ENCODE measurements at regions of chr2 and their contacts with region 1.

Region 1: DNA sequence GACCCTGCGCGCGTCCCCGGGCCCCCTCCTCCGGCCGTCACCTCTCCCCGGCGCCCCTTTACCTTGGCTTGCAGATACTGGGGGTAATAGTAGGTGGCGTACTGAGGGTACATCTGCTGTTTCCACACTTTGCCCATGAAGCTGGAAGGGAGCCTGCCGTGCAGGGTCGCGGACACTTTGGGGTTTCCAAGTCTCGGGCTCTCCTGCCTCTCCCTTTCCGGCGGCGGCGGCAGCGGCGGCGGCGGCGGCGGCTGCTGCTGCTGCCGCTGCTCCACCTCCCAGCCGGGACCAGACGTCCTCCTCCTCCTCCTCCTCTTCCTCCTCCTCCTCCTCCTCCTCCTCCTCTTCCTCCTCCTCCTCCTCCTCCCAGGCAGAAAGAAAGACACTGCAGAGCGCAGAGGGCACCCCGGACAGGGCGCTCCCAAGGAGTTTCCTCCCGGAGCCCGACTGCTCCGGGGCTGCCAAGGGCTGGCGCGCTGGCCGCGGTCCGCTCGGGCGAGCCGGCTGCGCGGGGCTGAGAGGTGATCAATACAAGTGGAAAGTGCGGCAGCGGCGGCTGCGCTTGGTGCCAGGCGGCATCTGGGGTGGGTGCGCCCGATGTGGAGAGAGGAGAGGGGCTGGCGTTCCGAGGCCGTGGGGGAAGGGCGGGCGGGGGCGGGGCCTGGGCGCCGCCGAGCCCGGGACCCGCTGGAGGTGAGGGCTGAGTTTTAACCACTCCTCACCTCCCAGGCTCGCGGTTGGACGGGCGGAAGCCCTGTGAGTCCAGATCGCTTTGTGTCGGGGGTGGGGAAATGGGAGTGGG is at the start of gene RBMS1:
- DNase-seq: peak in 1 of 2 donors; percentile 77
- H3K4me3 ChIP-seq: peak within 1 kb of the TSS; percentile 87 to 93
- H3K27ac ChIP-seq: peak within 1 kb of the TSS; percentile 94 to 96
- H3K4me1 ChIP-seq: peaks cover 8 to 11% of the 10 kb centered on the region in 2 donors
- H3K27me3 ChIP-seq: no peaks in the 10 kb centered on the region
- CTCF ChIP-seq: no peak
- total RNA-seq, gene RBMS1: 51.1 TPM

Region 2: DNA sequence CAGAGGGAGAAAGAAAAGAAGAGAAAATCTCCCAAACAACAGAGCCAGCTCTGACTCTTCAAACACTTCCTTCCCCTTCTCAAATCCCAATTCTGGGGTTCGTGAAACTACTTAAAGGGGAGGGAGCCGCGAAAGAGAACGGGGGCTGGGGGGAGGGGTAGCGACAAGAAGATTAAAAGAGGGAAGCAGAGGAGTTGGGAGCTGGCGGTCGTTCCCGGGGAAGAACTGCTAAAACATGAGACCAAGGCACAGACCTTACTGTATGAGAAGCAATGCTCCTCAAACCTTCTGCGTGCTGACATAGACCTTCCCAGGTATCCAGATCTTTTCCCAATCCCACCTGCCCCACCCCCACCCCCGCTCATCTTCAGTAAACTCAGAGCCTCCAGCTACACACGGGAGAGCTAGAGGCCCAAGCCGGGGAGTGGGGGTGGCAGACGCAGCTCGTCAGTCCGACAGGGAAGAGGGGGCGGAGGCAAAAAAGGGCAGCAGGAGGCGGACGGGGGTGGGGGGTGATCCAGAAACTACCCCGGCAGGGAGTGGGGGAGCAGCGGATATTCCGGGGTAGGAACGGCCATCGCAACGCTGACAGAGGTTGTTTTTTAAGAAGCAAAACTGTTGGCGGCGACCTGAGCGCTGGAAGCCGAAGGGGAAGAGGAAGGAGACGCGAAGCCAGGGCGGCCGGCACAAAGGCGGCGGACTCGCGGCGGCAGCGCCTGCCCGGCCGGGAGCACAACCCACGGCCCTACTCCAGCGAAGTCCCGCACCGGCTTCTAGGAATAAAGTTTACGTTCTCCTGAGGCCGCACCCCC is 878.1 kb before region 1 on chr2:
- intact Hi-C with region 1: loop called (anchors 10 kb)
- DNase-seq: peak; percentile 52 to 90
- H3K4me3 ChIP-seq: peak overlapping the region; percentile 77 to 81
- H3K27ac ChIP-seq: peak overlapping the region; percentile 94 to 97
- H3K4me1 ChIP-seq: peaks cover 2 to 15% of the 10 kb centered on the region in 2 donors
- H3K27me3 ChIP-seq: no peaks in the 10 kb centered on the region
- CTCF ChIP-seq: no peak

Region 3: DNA sequence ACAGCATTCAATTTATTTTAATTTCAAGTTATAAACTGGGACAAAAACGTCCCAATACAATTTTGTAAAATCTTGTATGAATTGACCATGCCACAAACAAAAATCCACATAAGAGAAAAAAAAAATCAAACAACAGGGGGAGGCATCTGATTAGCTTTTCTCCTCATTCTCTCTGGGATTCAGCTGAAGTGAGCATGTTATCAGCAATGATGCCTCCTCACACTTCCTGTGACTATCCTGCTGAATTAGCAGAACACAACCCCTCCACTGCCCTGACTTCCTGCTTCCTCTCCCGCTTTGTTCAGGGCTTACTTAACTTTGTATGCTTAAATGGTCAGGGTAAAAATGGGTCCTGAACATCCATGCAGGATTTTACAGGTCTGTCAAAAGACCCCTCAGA is 161.1 kb before region 1 on chr2:
- intact Hi-C with region 1: loop called (anchors 5 kb)
- DNase-seq: no peak
- H3K4me3 ChIP-seq: no peak overlapping the region
- H3K27ac ChIP-seq: no peak overlapping the region
- H3K4me1 ChIP-seq: peaks cover 3 to 36% of the 10 kb centered on the region in 2 donors
- H3K27me3 ChIP-seq: no peaks in the 10 kb centered on the region
- CTCF ChIP-seq: no peak

Region 4: GRCh38 chr2:160406591-160407392 is 86.6 kb before region 1 on chr2:
- intact Hi-C with region 1: loop called (anchors 5 kb)
- DNase-seq: peak in 1 of 2 donors; percentile 80
- H3K4me3 ChIP-seq: peak overlapping the region; percentile 92 to 99
- H3K27ac ChIP-seq: peak overlapping the region; percentile 97
- H3K4me1 ChIP-seq: peaks cover 10 to 44% of the 10 kb centered on the region in 2 donors
- H3K27me3 ChIP-seq: no peaks in the 10 kb centered on the region
- CTCF ChIP-seq: peak in 1 of 3 experiments; percentile 3

Region 5: GRCh38 chr2:160582490-160583145 is 89.2 kb after region 1 on chr2:
- intact Hi-C with region 1: loop called (anchors 5 kb)
- DNase-seq: no peak
- H3K4me3 ChIP-seq: no peak overlapping the region
- H3K27ac ChIP-seq: peak overlapping the region; percentile 50 to 58
- H3K4me1 ChIP-seq: peaks cover 9 to 16% of the 10 kb centered on the region in 2 donors
- H3K27me3 ChIP-seq: no peaks in the 10 kb centered on the region
- CTCF ChIP-seq: no peak

Region 6: DNA sequence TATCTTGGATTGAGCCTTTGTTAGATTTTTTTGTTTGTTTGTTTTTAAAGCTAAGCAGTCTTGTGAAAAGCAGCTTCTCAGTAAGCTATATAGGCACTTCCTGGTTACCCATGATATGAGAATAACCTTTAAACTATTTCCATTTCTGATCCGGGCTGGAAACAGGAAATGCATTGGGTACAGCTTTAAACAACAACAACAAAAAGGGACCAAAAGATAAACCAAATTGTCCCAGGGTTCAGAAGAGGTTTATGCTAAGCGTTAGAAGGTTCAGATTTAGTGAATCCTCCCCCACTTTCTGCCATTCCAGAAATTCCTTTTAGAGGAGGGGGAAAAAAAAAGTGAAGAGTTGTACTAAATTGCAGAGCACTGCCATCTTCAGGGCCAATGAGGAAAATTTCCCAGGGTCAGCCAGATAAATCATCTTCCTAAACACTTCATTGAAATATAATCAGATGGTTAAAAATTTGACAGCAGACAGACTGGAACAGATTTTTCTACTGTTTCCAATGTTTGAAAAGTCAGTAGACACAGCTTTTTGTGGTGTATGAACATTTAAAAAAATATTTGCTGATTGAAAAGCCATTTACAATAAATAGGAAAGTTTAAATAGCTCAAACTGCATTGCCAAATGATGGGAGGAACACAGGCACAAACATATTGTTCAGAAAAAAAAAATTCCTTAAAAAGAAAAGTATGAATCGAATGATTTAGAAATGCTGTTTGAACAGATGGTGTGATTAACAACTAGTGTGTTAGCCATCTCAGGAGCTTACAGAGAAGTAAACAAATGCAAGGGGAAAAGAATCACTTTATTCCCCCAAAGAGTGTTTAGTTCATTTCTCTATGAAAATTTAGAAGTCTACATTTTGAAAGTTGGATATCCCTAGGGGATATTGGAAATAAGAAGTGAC is 476.9 kb after region 1 on chr2:
- intact Hi-C with region 1: loop called (anchors 5 kb)
- DNase-seq: no peak
- H3K4me3 ChIP-seq: peak overlapping the region; percentile 39 to 52
- H3K27ac ChIP-seq: peak overlapping the region; percentile 46 to 51
- H3K4me1 ChIP-seq: no peaks in the 10 kb centered on the region
- H3K27me3 ChIP-seq: no peaks in the 10 kb centered on the region
- CTCF ChIP-seq: peak; percentile 65 to 85 (median 72)

Measured in ascending aorta (tissue), 2 donors.